OCI-LY7 (cell line): ENCODE measurements at regions of chr5 and their contacts with region 1.

Region 1: DNA sequence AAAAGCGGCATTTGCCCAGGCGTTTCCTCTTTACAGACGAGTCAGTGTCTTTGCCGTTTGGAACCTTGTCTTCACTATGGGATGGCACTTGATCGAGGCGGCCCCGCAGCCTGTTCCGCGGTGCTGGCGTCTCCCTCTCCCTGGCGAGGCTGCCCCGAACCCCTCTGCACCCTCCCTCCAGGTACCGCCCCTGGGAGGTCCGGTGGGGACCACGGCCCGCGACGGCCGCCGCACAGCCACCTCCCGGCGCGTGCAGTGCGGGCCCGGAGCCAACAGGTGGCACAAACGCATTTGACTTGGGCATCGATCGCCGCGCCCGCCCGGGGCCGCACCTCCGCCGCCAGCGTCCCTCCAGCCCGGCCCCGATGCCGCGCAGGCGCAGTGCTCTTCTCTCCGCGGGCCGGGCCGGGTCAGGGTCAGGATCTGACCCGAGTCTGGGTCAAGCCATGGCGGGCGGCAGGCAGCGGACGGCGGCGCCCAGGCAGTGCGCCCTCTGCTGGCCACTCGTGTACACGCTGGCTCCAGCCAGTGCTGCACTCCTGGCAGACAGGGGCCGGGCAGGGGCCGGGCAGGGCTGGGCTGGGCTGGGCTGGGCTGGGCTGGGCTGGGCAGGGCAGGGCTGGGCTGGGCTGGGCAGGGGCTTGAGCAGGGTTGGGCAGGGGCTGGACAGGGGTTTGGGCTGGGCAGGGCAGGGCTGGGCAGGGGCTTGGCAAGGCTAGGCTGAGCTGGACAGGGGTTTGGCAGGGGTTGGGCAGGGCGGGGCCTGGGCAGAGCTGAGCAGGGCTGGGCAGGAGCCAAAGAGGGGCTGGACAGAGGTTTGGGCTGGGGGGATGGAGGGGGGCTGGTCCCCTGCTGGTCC is 155.8 kb upstream of the IRX4 start:
- DNase-seq: peak; percentile 64
- H3K4me3 ChIP-seq: peak overlapping the region; percentile 64
- H3K27ac ChIP-seq: no peak overlapping the region
- H3K4me1 ChIP-seq: no peaks in the 10 kb centered on the region
- CTCF ChIP-seq: peak; percentile 93

Region 2: GRCh38 chr5:2156358-2157059 is 118.0 kb after region 1 on chr5:
- CTCF ChIA-PET with region 1: no interaction called
- POLR2A ChIA-PET with region 1: no interaction called
- intact Hi-C with region 1: loop called (anchors 5 kb)
- DNase-seq: no peak
- H3K4me3 ChIP-seq: no peak overlapping the region
- H3K27ac ChIP-seq: no peak overlapping the region
- H3K4me1 ChIP-seq: no peaks in the 10 kb centered on the region
- CTCF ChIP-seq: no peak